PC-9 (cell line): ENCODE measurements at regions of chr11 and their contacts with region 1.

Region 1: GRCh38 chr11:64729851-64730382 is 6.9 kb upstream of the NRXN2 start:
- DNase-seq: peak in 1 of 2 experiments; percentile 34
- H3K4me3 ChIP-seq: no peak overlapping the region
- H3K27ac ChIP-seq: no peak overlapping the region
- H3K4me1 ChIP-seq: no peaks in the 10 kb centered on the region
- H3K27me3 ChIP-seq: peaks cover 56% of the 10 kb centered on the region
- CTCF ChIP-seq: no peak

Region 2: DNA sequence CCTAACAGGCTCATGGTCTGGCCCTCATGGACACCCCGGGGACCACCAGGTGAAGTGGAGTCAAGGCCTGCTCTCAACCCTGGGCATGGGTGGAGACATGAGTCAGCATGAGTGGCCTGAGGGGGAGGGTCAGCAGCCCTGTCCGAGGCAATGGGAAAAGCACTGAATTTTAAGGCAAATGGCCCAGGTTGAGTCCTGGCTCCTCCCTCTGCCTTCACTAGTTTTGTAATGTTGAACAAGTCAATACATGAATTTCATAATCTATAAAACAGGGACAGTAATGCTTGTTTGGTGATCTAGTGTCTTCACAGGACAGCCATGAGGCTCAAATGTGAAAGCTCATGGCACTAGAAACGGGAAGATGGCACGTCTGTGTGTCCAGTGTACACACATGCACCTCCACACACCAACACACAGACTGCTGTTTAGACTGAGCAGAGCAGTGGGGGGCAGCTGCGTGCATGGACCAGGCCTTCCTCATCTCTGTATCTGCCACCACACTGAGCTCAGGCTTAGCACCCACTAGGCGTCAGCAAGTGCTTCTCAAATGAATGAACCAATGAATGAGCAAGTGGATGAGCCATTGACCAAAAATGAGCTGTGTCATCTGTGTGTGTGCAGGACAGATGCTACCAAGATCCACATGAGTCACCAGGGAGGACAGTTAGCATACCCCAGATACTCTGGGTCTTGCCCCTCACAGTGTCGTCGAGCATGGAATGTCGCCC is 70.3 kb before region 1 on chr11:
- CTCF ChIA-PET with region 1: interaction called, 5 read pairs
- POLR2A ChIA-PET with region 1: interaction called, 23 read pairs
- intact Hi-C with region 1: no loop called
- DNase-seq: peak; percentile 60 to 79
- H3K4me3 ChIP-seq: no peak overlapping the region
- H3K27ac ChIP-seq: peak overlapping the region; percentile 65
- H3K4me1 ChIP-seq: peaks cover 38% of the 10 kb centered on the region
- H3K27me3 ChIP-seq: no peaks in the 10 kb centered on the region
- CTCF ChIP-seq: no peak